ENCODE measurements at regions of chrX and their contacts with region 1.

Region 1: GRCh38 chrX:134396174-134396573 is 63.8 kb upstream of the HPRT1 start:
- DNase-seq: peak; percentile 36
- ATAC-seq: no peak
- H3K4me3 ChIP-seq: no peak overlapping the region
- H3K4me3 Mint-ChIP-seq: no peak overlapping the region
- H3K27ac ChIP-seq: no peak overlapping the region
- H3K27ac Mint-ChIP-seq: no peak overlapping the region
- H3K4me1 ChIP-seq: no peaks in the 10 kb centered on the region
- H3K4me1 Mint-ChIP-seq: no peaks in the 10 kb centered on the region
- H3K27me3 ChIP-seq: no peaks in the 10 kb centered on the region
- H3K27me3 Mint-ChIP-seq: no peaks in the 10 kb centered on the region
- CTCF ChIP-seq: peak; percentile 67

Region 2: GRCh38 chrX:134246282-134246681 is 149.9 kb before region 1 on chrX:
- CTCF ChIA-PET with region 1: interaction called, 32 read pairs
- POLR2A ChIA-PET with region 1: no interaction called
- intact Hi-C with region 1: loop called (anchors 1 kb)
- DNase-seq: peak; percentile 14
- ATAC-seq: no peak
- H3K4me3 ChIP-seq: no peak overlapping the region
- H3K4me3 Mint-ChIP-seq: no peak overlapping the region
- H3K27ac ChIP-seq: no peak overlapping the region
- H3K27ac Mint-ChIP-seq: no peak overlapping the region
- H3K4me1 ChIP-seq: no peaks in the 10 kb centered on the region
- H3K4me1 Mint-ChIP-seq: no peaks in the 10 kb centered on the region
- H3K27me3 ChIP-seq: peaks cover 0 to 11% (median 0%) of the 10 kb centered on the region in 4 experiments
- H3K27me3 Mint-ChIP-seq: peaks cover 4% of the 10 kb centered on the region
- CTCF ChIP-seq: no peak

Region 3: DNA sequence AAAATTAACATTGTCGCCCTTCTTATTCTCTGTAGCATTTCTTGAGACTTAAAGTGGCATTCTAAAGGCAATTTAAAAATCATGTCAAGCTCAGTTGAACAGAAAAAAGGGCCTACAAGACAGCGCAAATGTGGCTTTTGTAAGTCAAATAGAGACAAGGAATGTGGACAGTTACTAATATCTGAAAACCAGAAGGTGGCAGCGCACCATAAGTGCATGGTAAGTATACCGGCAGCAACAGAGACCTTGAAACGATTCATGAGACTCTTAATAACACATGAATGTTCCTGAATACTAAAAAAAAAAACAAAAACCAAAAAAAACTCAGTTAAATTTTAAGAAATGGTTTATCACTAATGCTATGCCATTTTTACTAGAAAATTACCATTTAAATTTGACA is 18.6 kb before region 1 on chrX:
- CTCF ChIA-PET with region 1: interaction called, 46 read pairs
- POLR2A ChIA-PET with region 1: no interaction called
- intact Hi-C with region 1: loop called (anchors 2 kb)
- DNase-seq: peak; percentile 58
- ATAC-seq: no peak
- H3K4me3 ChIP-seq: no peak overlapping the region
- H3K4me3 Mint-ChIP-seq: no peak overlapping the region
- H3K27ac ChIP-seq: no peak overlapping the region
- H3K27ac Mint-ChIP-seq: no peak overlapping the region
- H3K4me1 ChIP-seq: peaks cover 7 to 11% of the 10 kb centered on the region in 2 donors
- H3K4me1 Mint-ChIP-seq: peaks cover 28% of the 10 kb centered on the region
- H3K27me3 ChIP-seq: no peaks in the 10 kb centered on the region
- H3K27me3 Mint-ChIP-seq: no peaks in the 10 kb centered on the region
- CTCF ChIP-seq: peak; percentile 43

Region 4: DNA sequence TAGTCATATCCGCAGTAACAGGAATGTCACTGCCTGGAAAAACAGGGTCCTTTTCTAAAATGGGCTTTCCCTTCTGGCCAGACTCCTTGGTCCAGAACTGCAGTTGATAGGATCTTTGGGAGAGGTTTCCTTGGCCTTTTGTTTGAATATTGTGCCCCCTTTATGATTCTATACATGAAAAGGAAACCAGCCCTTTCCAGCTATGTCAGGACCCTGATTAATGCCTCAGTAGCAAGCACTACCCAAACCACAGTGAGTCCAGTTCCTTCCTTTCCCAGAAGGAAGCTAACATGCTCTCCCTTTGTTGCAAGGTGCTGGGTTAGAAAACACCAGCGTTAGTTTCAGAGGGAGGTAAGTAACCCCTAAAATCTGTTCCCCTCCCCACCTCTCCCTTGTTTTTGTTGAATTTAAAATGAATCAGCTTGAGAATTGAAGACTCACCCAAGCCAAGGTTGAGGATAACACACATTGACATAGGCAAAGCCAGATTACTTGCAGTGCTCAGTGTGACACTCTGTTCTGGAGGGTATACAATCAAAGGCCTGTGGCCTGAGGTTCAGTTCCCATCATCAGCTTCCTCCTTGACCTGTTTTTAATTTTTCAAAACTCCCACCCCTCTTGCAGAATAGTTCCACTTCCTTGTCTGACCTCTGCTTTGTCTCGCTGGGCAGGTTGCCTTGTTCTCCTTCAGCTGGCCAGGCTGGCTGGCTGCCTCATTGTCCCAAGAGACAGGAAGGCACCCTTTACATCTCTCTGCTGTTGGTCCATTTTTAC is 349.6 kb after region 1 on chrX:
- CTCF ChIA-PET with region 1: no interaction called
- POLR2A ChIA-PET with region 1: no interaction called
- intact Hi-C with region 1: no loop called
- DNase-seq: no peak
- ATAC-seq: no peak
- H3K4me3 ChIP-seq: no peak overlapping the region
- H3K4me3 Mint-ChIP-seq: no peak overlapping the region
- H3K27ac ChIP-seq: no peak overlapping the region
- H3K27ac Mint-ChIP-seq: no peak overlapping the region
- H3K4me1 ChIP-seq: peaks cover 0 to 3% of the 10 kb centered on the region in 2 donors
- H3K4me1 Mint-ChIP-seq: peaks cover 3% of the 10 kb centered on the region
- H3K27me3 ChIP-seq: no peaks in the 10 kb centered on the region
- H3K27me3 Mint-ChIP-seq: no peaks in the 10 kb centered on the region
- CTCF ChIP-seq: no peak

Measured in B cell (primary cell).